ENCODE measurements at regions of chr18 and their contacts with region 1.

Region 1: GRCh38 chr18:77376043-77376732 is 126.5 kb downstream of the GALR1 start:
- DNase-seq: no peak
- ATAC-seq: no peak
- H3K4me3 ChIP-seq: no peak overlapping the region
- H3K27ac ChIP-seq: no peak overlapping the region
- H3K4me1 ChIP-seq: no peaks in the 10 kb centered on the region
- H3K27me3 ChIP-seq: peaks cover 15% of the 10 kb centered on the region
- CTCF ChIP-seq: no peak

Region 2: GRCh38 chr18:76657428-76657827 is 718.8 kb before region 1 on chr18:
- CTCF ChIA-PET with region 1: no interaction called
- POLR2A ChIA-PET with region 1: no interaction called
- in situ Hi-C with region 1: no loop called
- intact Hi-C with region 1: no loop called
- DNase-seq: no peak
- ATAC-seq: no peak
- H3K4me3 ChIP-seq: no peak overlapping the region
- H3K27ac ChIP-seq: no peak overlapping the region
- H3K4me1 ChIP-seq: no peaks in the 10 kb centered on the region
- H3K27me3 ChIP-seq: peaks cover 35% of the 10 kb centered on the region
- CTCF ChIP-seq: no peak

Region 3: DNA sequence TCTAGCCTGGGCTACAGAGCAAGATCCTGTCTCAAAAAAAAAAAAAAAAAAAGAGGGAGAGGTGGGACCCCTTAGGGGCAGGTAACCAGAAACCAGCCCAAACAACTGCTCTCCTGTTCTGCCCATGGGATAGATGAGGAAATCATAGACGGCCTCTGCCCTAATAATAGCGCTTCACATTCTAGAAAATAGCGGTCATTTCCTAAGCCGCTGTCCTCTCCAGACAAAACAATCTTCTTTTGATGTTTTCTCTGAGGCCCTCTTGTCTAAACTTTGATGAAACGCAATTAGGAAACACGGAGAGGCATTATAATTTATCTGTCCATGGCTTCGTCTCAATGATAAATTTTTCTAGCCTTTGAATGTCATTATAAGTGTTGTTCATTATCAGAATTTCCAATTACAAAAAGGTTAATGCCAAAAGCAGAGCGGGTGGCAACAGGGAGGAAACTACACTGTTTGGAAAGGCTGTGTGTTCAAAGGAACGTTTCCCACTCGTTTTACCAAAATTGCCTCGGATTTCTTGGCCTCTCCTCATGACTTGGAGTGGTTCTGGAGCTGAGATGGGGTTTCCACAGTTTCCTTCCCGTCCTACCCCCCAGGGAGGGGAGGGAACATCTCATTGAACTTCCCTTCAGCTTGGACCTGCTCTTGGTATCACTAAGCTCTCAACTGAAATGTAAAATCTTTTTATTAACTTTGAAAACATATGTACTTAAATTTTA is 705.5 kb before region 1 on chr18:
- CTCF ChIA-PET with region 1: no interaction called
- POLR2A ChIA-PET with region 1: interaction called, 19 read pairs
- in situ Hi-C with region 1: no loop called
- intact Hi-C with region 1: no loop called
- DNase-seq: no peak
- ATAC-seq: no peak
- H3K4me3 ChIP-seq: no peak overlapping the region
- H3K27ac ChIP-seq: no peak overlapping the region
- H3K4me1 ChIP-seq: no peaks in the 10 kb centered on the region
- H3K27me3 ChIP-seq: peaks cover 3% of the 10 kb centered on the region; the same call in 1 of the 2 replicates
- CTCF ChIP-seq: no peak

Region 4: DNA sequence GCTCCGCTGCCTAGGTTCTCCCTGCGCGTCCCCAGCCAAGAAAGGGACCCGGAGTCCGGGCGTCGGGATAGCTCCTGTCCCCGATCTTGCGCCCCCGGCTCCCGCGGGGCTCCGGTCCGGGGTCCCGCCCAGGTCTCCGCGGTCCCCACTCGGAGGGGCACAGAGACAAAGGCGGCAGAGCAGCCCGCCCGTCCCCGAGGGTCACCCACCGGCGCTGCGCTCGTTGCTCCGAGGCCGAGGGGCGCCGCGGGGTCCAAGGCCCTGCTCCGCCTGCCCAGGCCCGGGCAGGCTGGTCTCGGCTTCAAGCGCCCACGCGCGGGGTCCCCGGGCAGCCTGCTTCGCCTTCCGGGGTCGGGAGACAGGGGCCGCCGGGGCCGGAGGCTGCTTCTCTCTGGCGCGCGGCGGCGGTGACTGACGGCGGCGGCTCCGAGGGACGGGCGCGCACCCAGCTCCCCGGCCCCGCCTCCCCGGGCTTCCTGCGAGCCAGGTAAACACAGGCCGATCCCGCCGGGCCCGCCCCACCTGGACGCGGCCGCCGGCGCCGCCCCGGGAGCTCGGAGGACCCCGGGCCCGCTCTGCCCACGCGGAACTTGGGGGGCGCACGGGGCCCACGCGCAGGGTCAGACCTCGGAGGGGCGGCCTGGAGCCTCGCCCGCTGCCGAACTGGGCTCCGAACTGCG is 243.7 kb before region 1 on chr18 and contains the start of gene MBP:
- CTCF ChIA-PET with region 1: interaction called, 11 read pairs
- POLR2A ChIA-PET with region 1: no interaction called
- in situ Hi-C with region 1: no loop called
- intact Hi-C with region 1: no loop called
- DNase-seq: no peak
- ATAC-seq: peak; percentile 73
- H3K4me3 ChIP-seq: peak within 1 kb of the TSS; percentile 77 to 86
- H3K27ac ChIP-seq: peak within 1 kb of the TSS; percentile 97
- H3K4me1 ChIP-seq: peaks cover 44% of the 10 kb centered on the region
- H3K27me3 ChIP-seq: no peaks in the 10 kb centered on the region
- CTCF ChIP-seq: no peak
- total RNA-seq, gene MBP: 88.8 TPM